HEK293 (cell line): ENCODE measurements at regions of chr19 and their contacts with region 1.

Region 1: GRCh38 chr19:53537480-53538383 is at the start of gene ZNF331:
- H3K4me3 ChIP-seq: peak within 1 kb of the TSS; percentile 70
- H3K27ac ChIP-seq: peak within 1 kb of the TSS; percentile 74; the same call in 1 of the 2 replicates
- H3K4me1 ChIP-seq: 0 out of 2 replicates have a peak, but pooled peaks cover 2% of the 10 kb centered on the region
- CTCF ChIP-seq: peak; percentile 92

Region 2: DNA sequence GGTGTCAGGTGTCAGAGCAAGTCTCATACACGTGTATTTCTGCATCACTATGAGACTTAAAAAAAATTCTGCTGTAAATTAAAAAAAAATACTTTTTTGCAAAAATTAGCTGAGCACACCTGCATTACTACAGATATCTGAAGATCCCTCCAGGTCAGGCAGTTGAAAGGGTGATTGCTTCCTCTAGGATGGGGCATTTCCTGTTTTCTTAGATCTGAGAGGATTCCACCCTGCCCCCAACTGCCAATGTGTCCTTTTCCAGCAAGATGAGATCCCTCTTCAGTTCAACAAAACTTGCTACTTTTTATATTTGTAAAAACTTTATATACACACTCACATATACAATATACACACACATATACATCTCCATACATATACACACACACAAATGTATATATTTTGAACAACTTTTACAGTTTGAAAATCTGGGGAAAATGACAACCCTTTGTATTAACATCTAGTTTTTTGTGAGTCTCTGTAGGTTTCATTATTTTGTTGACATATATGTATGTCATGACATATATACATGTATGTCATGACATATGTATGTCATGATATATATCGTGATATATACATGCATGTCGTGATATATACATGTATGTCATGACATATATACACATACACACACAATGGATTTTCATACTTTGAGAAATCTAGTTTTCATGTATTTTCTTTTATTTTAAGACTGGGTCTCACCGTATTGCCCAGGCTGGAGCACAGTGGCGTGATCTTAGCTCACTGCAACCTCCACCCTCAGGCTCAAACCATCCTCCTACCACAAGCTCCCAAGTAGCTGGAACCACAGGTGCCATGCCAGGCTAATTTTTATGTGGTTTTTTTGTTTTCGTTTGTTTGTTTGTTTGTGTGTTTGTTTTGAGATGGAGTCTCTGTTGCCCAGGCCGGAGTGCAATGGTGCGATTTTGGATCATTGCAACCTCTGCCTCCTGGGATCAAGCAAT is 52.4 kb before region 1 on chr19:
- CTCF ChIA-PET with region 1: no interaction called
- POLR2A ChIA-PET with region 1: no interaction called
- H3K4me3 ChIP-seq: no peak overlapping the region
- H3K27ac ChIP-seq: no peak overlapping the region
- H3K4me1 ChIP-seq: no peaks in the 10 kb centered on the region
- CTCF ChIP-seq: no peak

Region 3: GRCh38 chr19:53520550-53521372 is 17.0 kb before region 1 on chr19:
- CTCF ChIA-PET with region 1: no interaction called
- POLR2A ChIA-PET with region 1: interaction called, 17 read pairs
- H3K4me3 ChIP-seq: peak overlapping the region; percentile 65
- H3K27ac ChIP-seq: peak overlapping the region; percentile 50; the same call in 1 of the 2 replicates
- H3K4me1 ChIP-seq: no peaks in the 10 kb centered on the region
- CTCF ChIP-seq: no peak